AG04450 (cell line): ENCODE measurements at regions of chr17 and their contacts with region 1.

Region 1: DNA sequence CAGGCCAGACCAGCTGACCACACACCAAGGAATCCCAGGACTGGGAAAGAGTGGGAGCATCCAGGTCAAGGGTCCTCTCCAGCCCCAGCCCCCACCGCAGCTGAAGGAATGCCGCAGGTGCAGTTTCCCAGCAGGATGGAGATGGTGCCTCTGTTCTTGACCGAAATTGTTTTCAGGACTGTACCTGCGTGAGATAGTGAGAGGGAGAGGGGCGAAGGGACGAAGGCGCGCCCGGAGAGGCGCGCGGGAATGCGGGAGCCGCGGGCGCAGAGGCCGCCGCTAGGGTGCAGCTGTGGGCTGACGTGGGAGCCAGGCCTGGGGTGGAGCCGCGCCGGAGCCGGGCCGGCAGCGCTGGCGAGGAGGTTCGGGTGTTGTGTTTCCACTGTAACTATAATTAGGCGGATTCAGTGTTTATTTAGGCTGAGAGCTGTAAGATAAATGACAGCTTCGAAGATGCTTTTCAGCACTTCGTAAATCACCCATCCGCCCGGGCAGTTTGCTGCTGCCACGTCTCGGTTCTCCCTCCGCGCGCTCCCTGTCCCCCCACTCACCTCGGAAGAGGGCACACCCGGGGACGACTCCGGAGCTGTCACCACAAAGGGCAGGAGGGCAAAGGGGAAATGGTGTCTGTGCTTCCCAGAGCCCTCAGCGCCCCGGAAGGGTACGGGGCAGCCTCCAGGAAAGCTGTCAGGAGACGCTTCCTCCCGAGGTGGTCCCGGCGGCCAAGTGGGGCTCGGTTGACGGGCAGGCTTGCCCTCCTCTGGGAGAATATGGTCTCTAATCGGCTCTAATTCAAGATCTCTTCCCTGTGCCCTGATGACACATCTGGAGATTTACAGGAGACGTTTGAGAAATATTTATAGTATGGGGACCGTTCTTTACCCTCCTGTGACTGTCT is 38.2 kb downstream of the HOXB1 start:
- DNase-seq: no peak
- H3K4me3 ChIP-seq: peak overlapping the region; percentile 48
- H3K27ac ChIP-seq: no peak overlapping the region
- H3K27me3 ChIP-seq: no peaks in the 10 kb centered on the region
- CTCF ChIP-seq: peak; percentile 83

Region 2: GRCh38 chr17:48503748-48504147 is 11.1 kb after region 1 on chr17:
- CTCF ChIA-PET with region 1: interaction called, 9 read pairs
- POLR2A ChIA-PET with region 1: interaction called, 13 read pairs
- DNase-seq: peak; percentile 89
- H3K4me3 ChIP-seq: no peak overlapping the region
- H3K27ac ChIP-seq: peak overlapping the region; percentile 41
- H3K27me3 ChIP-seq: no peaks in the 10 kb centered on the region
- CTCF ChIP-seq: no peak

Region 3: GRCh38 chr17:48513097-48513496 is 20.4 kb after region 1 on chr17:
- CTCF ChIA-PET with region 1: interaction called, 7 read pairs
- POLR2A ChIA-PET with region 1: interaction called, 10 read pairs
- DNase-seq: no peak
- H3K4me3 ChIP-seq: no peak overlapping the region
- H3K27ac ChIP-seq: no peak overlapping the region
- H3K27me3 ChIP-seq: peaks cover 2% of the 10 kb centered on the region
- CTCF ChIP-seq: no peak

Region 4: DNA sequence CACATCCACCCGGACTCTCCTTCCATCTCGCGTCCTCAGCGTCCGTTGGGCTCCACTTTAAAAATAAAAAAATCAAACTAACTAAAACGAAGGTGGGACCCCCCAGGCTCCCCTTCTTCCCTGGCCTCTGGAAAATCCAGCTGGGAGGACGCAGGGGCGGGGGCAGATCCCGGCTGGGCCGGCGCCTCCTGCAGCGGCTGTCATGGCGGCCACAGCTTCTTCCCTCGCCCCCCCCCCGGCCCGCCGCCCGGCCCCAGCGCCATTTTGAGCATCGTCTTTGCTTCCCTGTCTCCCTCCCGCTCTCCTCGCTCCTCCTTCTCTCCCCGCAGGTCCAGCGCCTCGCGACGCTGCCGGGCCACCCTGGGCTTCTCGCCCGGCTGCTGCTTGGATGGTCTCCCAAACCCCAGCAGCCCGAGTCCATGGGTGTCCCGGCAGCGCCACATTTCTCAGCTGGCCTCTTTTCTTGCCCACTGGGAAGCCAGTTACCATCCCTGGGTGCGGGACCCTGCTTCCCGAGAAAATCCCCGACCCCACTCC is 49.0 kb after region 1 on chr17:
- CTCF ChIA-PET with region 1: interaction called, 16 read pairs
- POLR2A ChIA-PET with region 1: interaction called, 5 read pairs
- DNase-seq: no peak
- H3K4me3 ChIP-seq: peak overlapping the region; percentile 87
- H3K27ac ChIP-seq: peak overlapping the region; percentile 96
- H3K27me3 ChIP-seq: no peaks in the 10 kb centered on the region
- CTCF ChIP-seq: no peak

Region 5: GRCh38 chr17:49239963-49240362 is 747.3 kb after region 1 on chr17:
- CTCF ChIA-PET with region 1: no interaction called
- POLR2A ChIA-PET with region 1: no interaction called
- DNase-seq: no peak
- H3K4me3 ChIP-seq: no peak overlapping the region
- H3K27ac ChIP-seq: no peak overlapping the region
- H3K27me3 ChIP-seq: peaks cover 21% of the 10 kb centered on the region
- CTCF ChIP-seq: no peak